ENCODE measurements at regions of chr15 and their contacts with region 1.

Region 1: DNA sequence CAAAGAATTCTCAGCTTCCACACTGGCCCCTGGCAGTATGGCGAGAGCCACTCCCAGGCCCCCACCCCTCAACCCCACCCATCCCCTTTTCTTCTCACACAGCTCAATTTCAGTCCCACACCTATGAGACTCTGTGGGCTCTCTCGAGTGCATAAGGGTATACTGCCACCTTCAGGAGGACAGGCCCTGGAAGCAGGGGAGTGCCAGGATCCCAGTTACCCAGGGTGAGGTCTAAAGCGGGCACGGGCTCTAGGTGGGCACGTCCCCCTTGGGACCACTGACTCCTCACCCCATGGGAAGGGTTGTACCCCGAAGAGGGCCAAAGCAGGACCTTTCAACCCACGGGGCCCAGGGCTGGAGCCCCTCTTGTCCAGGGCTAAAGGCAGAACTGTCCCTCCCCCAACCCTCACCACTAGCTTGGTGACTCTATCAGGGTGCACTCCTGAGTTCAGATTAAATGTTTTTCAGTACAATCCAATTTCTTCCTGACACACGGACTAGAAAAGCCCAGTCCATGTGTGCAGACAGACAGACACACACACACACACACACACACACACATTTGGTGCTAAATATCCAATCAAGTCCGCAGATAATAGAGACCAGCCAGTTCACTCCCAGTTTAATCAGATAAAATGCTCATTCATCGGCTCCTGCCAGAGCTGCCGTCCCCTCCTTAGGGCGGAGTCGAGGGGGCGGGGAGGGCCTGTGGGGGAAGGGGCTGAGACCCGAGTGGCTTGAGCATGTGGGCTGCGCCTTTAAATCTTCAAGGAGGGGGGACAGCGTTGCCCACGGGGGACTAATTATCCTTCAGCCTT is 59.4 kb downstream of the CYP11A1 start:
- DNase-seq: peak; percentile 57
- H3K4me3 Mint-ChIP-seq: no peak overlapping the region
- H3K27ac Mint-ChIP-seq: peak overlapping the region; percentile 25
- H3K4me1 Mint-ChIP-seq: no peaks in the 10 kb centered on the region
- H3K27me3 Mint-ChIP-seq: peaks cover 76% of the 10 kb centered on the region

Region 2: DNA sequence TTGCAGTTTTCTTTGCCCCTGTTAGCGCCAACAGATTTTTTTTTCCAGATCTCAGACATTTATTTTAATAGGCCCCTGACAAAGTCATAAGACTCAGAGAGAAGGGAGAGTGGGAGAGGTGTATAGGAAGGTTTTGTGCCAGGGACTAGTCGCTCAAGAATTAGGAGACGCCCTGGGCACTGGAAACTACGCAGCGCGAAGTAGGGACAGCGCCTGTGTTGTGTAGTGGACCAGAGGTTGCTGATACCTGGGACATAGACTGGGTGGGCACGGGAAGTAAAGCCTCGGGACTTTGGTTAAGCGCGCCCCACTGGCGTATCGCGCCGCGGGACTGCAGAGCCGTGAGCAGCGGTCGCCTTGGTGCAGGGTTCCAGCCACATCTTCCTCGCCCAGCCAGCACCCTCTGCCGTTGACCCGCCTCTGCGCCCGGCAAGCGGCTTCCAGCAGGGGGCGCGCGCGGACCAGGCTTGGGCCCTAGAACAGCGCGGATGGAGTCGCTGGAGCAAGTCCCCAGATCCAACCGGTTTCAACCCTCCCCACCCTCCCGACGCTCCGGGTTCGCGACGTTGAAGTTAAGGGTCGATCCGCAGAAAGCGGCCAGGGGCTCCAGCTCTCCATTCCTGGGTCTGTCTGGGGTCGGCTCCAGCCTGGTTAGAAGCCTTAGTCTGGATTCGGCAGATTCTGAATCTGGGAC is 180.6 kb before region 1 on chr15:
- CTCF ChIA-PET with region 1: interaction called, 10 read pairs
- DNase-seq: peak; percentile 88
- H3K4me3 Mint-ChIP-seq: no peak overlapping the region
- H3K27ac Mint-ChIP-seq: peak overlapping the region; percentile 65
- H3K4me1 Mint-ChIP-seq: peaks cover 13% of the 10 kb centered on the region
- H3K27me3 Mint-ChIP-seq: peaks cover 94% of the 10 kb centered on the region

Region 3: GRCh38 chr15:74540761-74541493 is 232.9 kb after region 1 on chr15 and contains the start of gene ARID3B:
- CTCF ChIA-PET with region 1: no interaction called
- DNase-seq: peak; percentile 98
- H3K4me3 Mint-ChIP-seq: peak within 1 kb of the TSS; percentile 93
- H3K27ac Mint-ChIP-seq: peak within 1 kb of the TSS; percentile 97
- H3K4me1 Mint-ChIP-seq: peaks cover 53% of the 10 kb centered on the region
- H3K27me3 Mint-ChIP-seq: no peaks in the 10 kb centered on the region